Activated CD8-positive, alpha-beta T cell treated with anti-CD3 and anti-CD28 coated beads, Interleukin-2, amount 10 ng/mL, durations not matched to agents 7 days and 5 days (primary cell): ENCODE measurements at regions of chr15 and their contacts with region 1.

Region 1: GRCh38 chr15:60548101-60548500 is 69.2 kb upstream of the ICE2 start:
- DNase-seq: peak; percentile 60
- ATAC-seq: peak; percentile 80
- H3K4me3 Mint-ChIP-seq: peak overlapping the region; percentile 60
- H3K27ac Mint-ChIP-seq: peak overlapping the region; percentile 90
- H3K4me1 Mint-ChIP-seq: peaks cover 94% of the 10 kb centered on the region
- H3K27me3 Mint-ChIP-seq: no peaks in the 10 kb centered on the region

Region 2: GRCh38 chr15:60568301-60568742 is 20.2 kb after region 1 on chr15:
- CTCF ChIA-PET with region 1: interaction called, 68 read pairs
- POLR2A ChIA-PET with region 1: interaction called, 3 read pairs
- DNase-seq: no peak
- ATAC-seq: no peak
- H3K4me3 Mint-ChIP-seq: peak overlapping the region; percentile 19
- H3K27ac Mint-ChIP-seq: peak overlapping the region; percentile 73
- H3K4me1 Mint-ChIP-seq: peaks cover 87% of the 10 kb centered on the region
- H3K27me3 Mint-ChIP-seq: no peaks in the 10 kb centered on the region

Region 3: DNA sequence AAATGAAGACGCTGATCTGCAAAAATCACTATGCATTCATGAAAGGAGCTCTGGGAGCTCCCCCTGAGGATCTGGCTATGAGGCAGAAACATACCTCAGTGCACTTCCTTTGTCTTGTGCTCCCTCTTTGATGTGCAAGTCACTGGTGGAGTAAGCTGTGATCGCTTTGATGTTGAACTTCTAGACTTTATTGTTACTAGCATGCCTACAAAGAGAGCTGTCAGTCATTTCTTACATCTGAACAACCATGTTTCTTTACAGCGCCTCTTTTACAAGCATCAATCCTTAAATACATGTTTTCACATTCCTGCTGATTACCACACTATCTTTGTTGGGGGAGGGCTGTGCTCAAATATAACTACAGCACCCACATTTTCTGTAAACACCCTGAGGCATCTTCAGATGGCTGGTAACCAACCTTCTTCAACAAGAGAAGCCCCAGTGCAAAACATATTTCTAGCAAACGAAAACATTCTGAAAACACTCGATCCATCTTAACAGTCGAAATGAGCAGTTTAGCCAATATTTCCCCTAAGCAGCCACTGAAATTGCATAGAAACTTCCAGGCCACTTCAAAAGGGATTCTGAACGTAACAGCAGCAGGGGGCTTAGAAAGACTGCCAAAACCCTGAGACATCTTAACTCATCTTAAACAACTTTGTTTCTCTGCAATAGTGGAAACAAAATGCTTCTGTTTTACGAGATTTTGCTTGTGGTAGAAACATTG is 32.7 kb after region 1 on chr15:
- CTCF ChIA-PET with region 1: interaction called, 84 read pairs
- POLR2A ChIA-PET with region 1: interaction called, 12 read pairs
- DNase-seq: peak; percentile 68
- ATAC-seq: peak; percentile 81
- H3K4me3 Mint-ChIP-seq: peak overlapping the region; percentile 74
- H3K27ac Mint-ChIP-seq: peak overlapping the region; percentile 96
- H3K4me1 Mint-ChIP-seq: peaks cover 86% of the 10 kb centered on the region
- H3K27me3 Mint-ChIP-seq: no peaks in the 10 kb centered on the region

Region 4: DNA sequence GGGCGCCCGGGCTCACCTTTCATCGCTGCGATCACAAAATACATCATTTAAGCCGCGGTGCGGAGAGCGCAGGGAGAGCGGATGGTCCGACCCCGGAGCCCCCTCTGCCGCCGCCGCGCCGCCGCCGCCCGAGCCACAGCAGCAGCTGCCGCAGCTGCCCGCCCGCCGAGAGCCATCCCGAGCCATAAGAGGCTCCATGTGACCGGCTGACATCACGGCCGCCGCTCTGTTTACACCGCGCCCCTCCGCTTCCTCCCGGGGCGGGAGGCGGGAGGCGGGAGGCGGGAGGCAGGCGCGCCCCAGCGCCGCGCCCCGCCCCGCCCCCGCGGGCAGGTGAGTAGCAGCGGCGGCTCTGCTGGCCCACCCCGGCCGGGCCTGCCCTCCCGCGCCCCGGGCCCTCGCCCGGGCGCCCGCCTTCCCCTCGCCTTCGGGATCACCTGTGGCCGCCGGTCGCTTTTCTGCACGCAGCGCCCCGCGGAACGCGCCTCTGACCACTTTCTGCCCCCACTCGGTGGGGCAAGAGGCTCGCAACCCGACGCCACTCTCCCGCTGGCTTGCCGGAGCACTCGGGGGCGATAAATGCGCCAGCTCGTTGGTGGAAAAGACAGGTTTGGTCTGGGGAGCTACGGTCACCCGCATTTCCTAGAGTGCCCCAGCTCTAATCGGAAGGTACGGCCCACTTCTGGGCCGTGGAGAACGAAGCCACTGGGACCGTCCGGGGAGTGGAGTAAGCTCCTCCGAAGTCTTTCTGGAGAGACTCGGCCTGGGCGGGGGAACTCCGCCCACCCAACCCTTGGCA is 44.5 kb after region 1 on chr15:
- CTCF ChIA-PET with region 1: interaction called, 84 read pairs
- POLR2A ChIA-PET with region 1: interaction called, 13 read pairs
- DNase-seq: peak; percentile 90
- ATAC-seq: peak; percentile 89
- H3K4me3 Mint-ChIP-seq: peak overlapping the region; percentile 82
- H3K27ac Mint-ChIP-seq: peak overlapping the region; percentile 83
- H3K4me1 Mint-ChIP-seq: peaks cover 58% of the 10 kb centered on the region
- H3K27me3 Mint-ChIP-seq: no peaks in the 10 kb centered on the region

Region 5: DNA sequence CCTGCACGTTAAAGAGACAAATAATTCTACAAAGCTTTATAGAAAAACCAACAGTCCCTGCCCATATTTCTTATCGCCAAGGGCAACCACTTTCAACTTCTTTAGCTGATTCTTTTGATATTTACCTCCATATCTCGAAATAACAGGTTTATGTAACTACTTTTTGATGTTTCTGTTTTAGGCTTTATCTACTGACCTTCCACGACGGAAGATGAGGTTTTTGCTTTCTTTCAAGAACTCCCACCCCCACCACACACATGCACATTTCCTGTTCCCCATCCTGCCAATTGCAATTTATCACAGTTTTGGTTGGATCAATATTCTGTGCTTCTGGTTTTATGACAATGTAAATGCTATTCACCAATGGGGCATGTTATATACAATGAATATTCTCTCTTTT is 261.3 kb after region 1 on chr15:
- CTCF ChIA-PET with region 1: no interaction called
- POLR2A ChIA-PET with region 1: no interaction called
- DNase-seq: no peak
- ATAC-seq: peak; percentile 44
- H3K4me3 Mint-ChIP-seq: peak overlapping the region; percentile 20
- H3K27ac Mint-ChIP-seq: peak overlapping the region; percentile 67
- H3K4me1 Mint-ChIP-seq: peaks cover 51% of the 10 kb centered on the region
- H3K27me3 Mint-ChIP-seq: peaks cover 2% of the 10 kb centered on the region